ENCODE measurements at regions of chr17 and their contacts with region 1.

Region 1: DNA sequence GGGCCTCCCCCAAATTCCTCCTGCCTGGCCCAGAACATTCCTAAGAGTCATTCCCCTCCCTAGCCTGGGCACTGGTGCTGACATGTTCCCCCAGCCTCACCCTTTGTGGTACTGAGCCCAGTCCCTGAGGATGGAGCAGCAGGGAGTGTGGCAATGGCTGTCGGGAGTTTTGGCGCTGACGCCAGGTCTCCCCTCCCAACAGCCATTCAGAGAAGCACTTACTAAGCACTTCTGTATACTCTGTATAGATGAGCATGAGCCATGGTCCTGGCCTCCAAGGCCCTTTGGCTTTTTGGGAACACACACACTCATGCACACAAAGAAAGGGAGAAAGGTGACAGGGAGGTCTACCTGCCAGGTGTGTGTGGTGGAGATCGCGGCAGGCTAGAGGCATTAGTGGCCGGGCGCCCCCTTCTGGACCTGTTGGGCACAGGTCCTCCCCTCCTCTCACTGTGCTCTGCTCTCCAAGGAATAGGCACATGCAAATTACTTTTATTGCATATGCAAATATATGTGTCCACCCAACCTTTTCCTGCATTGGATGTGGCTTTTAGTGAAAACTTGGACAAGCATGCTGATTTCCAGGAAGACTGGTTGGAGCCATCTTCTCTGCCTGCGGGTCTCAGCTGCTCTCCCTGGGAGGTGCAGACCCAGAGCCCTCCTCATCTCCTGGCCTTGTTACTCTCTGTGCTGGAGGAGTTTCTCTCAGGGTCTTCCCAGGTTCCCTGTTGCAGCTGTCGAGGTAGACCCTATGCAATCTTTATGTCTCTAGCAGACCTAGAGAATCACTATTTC is 17.4 kb upstream of the C17orf107 start:
- H3K4me3 ChIP-seq: no peak overlapping the region
- H3K27ac ChIP-seq: no peak overlapping the region
- H3K4me1 ChIP-seq: no peaks in the 10 kb centered on the region
- CTCF ChIP-seq: peak; percentile 54; the same call in 1 of the 2 replicates

Region 2: DNA sequence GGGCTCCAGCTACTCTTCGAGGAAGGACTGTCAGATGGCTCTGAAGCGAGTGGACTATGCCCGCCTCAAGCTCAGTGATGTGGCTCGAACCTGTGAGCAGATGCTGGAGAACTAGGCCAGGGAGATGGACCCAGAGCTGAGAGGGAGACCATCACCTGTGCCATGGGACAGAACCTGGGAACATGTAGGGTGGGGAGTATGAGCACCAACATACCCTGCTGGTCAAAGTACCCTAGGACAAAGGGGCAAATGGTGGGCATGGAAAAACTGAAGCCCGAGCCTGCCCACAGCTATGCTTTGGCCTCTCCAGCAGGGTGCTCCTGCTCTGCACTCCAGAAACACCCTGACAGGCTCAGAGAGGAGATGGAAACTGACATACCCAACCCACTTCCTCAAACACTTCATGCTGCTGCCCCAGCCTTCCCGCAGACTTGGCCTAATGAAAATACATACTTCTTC is 148.9 kb before region 1 on chr17:
- CTCF ChIA-PET with region 1: interaction called, 12 read pairs
- POLR2A ChIA-PET with region 1: no interaction called
- H3K4me3 ChIP-seq: no peak overlapping the region
- H3K27ac ChIP-seq: no peak overlapping the region
- H3K4me1 ChIP-seq: no peaks in the 10 kb centered on the region
- CTCF ChIP-seq: 0 out of 2 replicates have a peak, but pooled peaks have one; percentile 8

Region 3: DNA sequence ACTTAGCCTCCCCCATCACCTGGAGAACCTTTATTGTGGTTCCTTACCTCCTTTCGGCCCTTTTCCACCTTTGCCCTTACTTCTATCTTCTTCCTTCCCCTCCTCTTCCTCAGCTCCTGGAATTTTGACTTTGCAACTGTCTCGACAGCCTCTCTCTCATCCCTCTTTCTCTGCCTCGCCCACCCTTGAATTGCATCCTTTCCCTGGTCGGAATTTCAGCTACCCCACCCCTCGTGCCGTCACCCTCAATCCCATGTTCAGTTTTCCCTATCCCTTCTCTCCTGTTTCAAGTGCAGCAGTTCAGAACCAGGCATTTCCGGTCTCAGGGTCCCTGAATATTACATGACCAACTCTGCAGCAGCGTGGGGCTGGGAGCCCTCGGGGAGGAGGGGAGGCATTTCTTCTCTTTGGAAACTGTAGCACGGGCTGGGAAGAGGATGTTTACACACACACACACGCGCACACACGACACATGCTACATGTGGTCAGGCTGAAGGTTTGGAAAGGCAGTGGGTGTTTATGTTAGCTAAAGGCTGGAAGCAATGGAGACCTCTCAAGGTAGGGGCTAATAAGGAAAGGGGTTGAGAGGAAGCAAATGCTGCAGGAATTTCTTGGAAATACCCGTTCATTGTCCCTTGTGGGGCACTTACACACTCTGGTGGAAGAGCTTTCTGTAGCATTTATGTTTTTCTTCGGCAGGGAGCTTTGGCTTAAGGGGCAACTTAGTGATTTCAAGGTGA is 47.8 kb before region 1 on chr17:
- CTCF ChIA-PET with region 1: interaction called, 10 read pairs
- POLR2A ChIA-PET with region 1: no interaction called
- H3K4me3 ChIP-seq: peak overlapping the region; percentile 90
- H3K27ac ChIP-seq: peak overlapping the region; percentile 81
- H3K4me1 ChIP-seq: peaks cover 14% of the 10 kb centered on the region
- CTCF ChIP-seq: no peak

Region 4: GRCh38 chr17:5042157-5043022 is 160.4 kb after region 1 on chr17:
- CTCF ChIA-PET with region 1: no interaction called
- POLR2A ChIA-PET with region 1: no interaction called
- H3K4me3 ChIP-seq: no peak overlapping the region
- H3K27ac ChIP-seq: no peak overlapping the region
- H3K4me1 ChIP-seq: no peaks in the 10 kb centered on the region
- CTCF ChIP-seq: no peak

Measured in HEK293 (cell line).